Heart left ventricle (tissue), 16 donors: ENCODE measurements at regions of chr19 and their contacts with region 1.

Region 1: DNA sequence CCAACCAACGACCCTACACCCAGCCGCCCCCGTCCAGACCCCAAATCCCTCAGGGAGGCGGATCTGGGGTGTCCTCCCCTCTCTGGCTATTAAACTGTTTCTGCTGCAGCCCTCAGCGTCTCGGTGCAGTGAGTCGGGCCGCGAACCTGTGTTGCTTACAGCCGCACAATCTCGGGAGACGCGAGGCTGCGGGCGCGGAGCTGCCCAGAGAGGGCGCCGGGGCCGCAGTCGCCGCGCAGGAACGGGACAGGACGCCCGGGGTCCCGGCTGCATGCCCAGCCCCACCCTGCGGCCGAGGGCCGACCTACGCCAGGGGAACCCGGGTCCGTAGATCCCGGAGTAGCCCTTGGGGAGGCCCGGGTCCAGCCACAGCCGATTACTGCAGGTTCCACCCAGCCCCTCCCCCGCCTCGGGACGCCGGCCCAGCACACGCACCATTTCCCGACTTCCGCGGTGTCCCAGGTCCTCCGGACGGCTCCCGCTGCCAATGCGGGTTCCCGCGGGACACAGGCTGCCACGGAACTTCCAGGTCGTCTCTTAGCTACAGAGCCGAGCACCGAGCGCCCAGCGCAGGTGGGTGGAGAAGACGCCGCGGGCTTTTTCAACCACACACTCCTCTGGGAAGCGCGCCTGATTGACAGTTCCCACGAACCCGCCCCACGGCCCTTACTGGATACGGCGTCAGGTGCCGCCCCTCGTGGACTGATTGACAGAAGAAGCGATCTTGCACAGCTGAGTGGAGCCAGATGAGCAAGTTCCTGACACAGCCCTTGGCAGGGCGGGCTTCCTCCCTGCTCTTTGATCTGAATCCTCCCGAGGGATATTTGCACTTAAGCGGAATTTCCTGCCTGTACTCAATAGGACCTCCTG is at the start of gene ZNF799:
- DNase-seq: peak; percentile 98 to 99 (median 98)
- ATAC-seq: peak; percentile 99 to 100 (median 100)
- H3K4me3 ChIP-seq: peak within 1 kb of the TSS; percentile 67 to 94 (median 84)
- H3K27ac ChIP-seq: peak within 1 kb of the TSS; percentile 19 to 93 (median 88)
- H3K4me1 ChIP-seq: peaks cover 0 to 13% (median 5%) of the 10 kb centered on the region in 12 donors
- H3K27me3 ChIP-seq: no peaks in the 10 kb centered on the region
- CTCF ChIP-seq: peak in 4 of 12 donors; percentile 16 to 34 (median 30)
- POLR2A ChIP-seq: peak in 1 of 2 donors; percentile 62
- total RNA-seq, gene ZNF799: 1.5 to 3.9 (median 2.1) TPM

Region 2: GRCh38 chr19:12333162-12334159 is 67.4 kb before region 1 on chr19 and contains the start of gene ZNF563:
- intact Hi-C with region 1: loop called in 1 of 10 experiments (anchors 5 kb)
- DNase-seq: peak; percentile 96 to 99 (median 98)
- ATAC-seq: peak; percentile 97 to 99 (median 99)
- H3K4me3 ChIP-seq: peak within 1 kb of the TSS; percentile 63 to 99 (median 80)
- H3K27ac ChIP-seq: peak within 1 kb of the TSS; percentile 79 to 97 (median 90)
- H3K4me1 ChIP-seq: peaks cover 0 to 37% (median 17%) of the 10 kb centered on the region in 12 donors
- H3K27me3 ChIP-seq: no peaks in the 10 kb centered on the region
- CTCF ChIP-seq: no peak
- POLR2A ChIP-seq: peak; percentile 46 to 95
- total RNA-seq, gene ZNF563: 1.5 to 6.9 (median 3.8) TPM

Region 3: DNA sequence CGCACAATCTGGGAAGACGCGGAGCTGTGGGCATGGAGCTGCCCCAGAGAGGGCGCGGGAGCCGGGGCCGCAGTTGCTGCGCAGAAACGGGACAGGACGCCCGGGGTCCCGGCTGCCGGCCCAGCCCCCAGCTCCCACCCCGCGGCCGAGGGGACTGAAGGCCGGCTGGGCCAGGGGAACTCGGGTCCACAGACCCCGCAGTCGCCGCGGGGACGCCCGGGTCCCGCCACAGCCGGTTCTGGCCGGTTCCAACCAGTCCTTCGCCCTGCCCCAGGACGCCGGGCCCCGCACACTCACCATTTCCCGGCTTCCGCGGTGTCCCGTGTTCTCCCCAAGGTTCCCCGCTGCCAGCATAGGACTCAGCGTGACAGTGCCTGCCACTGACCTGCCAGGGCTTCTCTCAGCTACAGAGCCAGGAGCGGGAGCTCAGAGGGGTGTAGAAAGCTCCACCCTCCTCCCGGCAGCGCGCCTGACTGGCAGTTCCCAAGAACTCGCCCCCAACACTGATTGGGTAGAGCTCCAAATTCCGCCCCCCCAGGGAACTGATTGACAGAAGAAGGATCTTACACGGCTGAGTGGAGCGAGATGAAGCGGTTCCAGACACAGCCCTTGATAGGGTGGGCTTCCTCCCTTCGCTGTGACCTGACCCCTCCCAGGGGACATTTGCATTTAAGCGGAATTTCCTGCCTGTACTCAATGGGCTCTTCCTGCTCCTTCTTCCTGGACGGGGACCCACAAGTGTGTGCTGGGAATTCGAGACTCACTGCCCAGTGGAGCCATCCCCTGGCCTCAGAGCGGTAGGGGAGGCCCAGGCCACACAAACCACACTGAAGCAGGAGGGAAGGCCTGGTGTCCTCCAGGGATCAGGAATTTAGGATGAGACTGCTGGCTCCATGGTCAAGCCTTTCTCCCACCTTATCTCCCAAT is 35.4 kb before region 1 on chr19 and contains the start of gene ZNF442:
- intact Hi-C with region 1: loop called in 2 of 10 experiments (anchors 2 to 5 kb)
- DNase-seq: peak; percentile 94 to 99 (median 98)
- ATAC-seq: peak; percentile 99 to 100 (median 99)
- H3K4me3 ChIP-seq: peak within 1 kb of the TSS; percentile 66 to 99 (median 94)
- H3K27ac ChIP-seq: peak within 1 kb of the TSS; percentile 77 to 97 (median 90)
- H3K4me1 ChIP-seq: peaks cover 0 to 19% (median 11%) of the 10 kb centered on the region in 12 donors
- H3K27me3 ChIP-seq: no peaks in the 10 kb centered on the region
- CTCF ChIP-seq: peak; percentile 22 to 83 (median 66)
- POLR2A ChIP-seq: peak; percentile 9 to 93
- total RNA-seq, gene ZNF442: 1.1 to 4.3 (median 3.6) TPM

Region 4: GRCh38 chr19:12440541-12441316 is 39.9 kb after region 1 on chr19 and contains the start of gene ZNF443:
- intact Hi-C with region 1: loop called in 2 of 10 experiments (anchors 2 kb)
- DNase-seq: peak; percentile 98 to 99 (median 99)
- ATAC-seq: peak; percentile 100
- H3K4me3 ChIP-seq: peak within 1 kb of the TSS; percentile 58 to 87 (median 76)
- H3K27ac ChIP-seq: peak within 1 kb of the TSS; percentile 40 to 87 (median 76)
- H3K4me1 ChIP-seq: peaks cover 0 to 12% (median 0%) of the 10 kb centered on the region in 12 donors
- H3K27me3 ChIP-seq: no peaks in the 10 kb centered on the region
- CTCF ChIP-seq: peak in 2 of 12 donors; percentile 12 to 21
- POLR2A ChIP-seq: peak in 1 of 2 donors; percentile 59
- total RNA-seq, gene ZNF443: 1.5 to 3.6 (median 2.1) TPM

Region 5: DNA sequence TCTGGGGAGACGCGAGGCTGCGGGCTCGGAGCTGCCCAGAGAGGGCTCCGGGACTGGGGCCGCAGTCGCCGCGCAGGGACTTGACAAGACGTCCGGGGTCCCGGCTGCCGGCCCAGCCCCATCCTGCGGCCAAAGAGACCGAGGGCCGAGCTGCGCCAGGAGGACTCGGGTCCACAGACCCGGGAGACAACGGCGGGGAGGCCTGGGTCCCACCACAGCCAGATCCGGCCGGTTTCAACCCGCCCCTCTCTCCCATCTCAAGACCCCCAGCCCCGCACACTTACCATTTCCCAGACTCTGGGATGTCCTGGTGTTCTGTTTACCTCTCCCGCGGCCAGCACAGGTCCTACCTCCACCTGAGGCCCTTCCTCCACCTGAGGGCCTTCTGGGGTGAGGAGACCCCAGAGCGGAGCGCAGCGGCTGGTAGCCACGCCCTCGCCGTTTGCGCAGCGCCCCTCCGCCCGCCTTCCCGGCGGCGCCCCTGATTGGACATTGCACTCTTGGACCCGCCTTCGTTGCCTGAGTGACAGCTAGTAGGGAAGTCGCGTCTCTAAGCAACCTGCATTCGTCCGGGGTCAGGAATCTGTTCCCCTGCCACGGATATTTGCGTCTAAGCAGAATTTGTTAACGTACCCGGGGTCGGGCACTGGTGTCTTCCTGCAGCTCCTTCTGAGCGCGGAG is 83.6 kb after region 1 on chr19 and contains the start of gene ZNF709:
- intact Hi-C with region 1: loop called in 1 of 10 experiments (anchors 10 kb)
- DNase-seq: peak; percentile 91 to 95 (median 93)
- ATAC-seq: peak; percentile 98 to 100 (median 100)
- H3K4me3 ChIP-seq: peak within 1 kb of the TSS; percentile 80 to 99 (median 94)
- H3K27ac ChIP-seq: peak within 1 kb of the TSS; percentile 39 to 87 (median 76)
- H3K4me1 ChIP-seq: peaks cover 0 to 27% (median 13%) of the 10 kb centered on the region in 12 donors
- H3K27me3 ChIP-seq: no peaks in the 10 kb centered on the region
- CTCF ChIP-seq: no peak
- POLR2A ChIP-seq: peak in 1 of 2 donors; percentile 51
- total RNA-seq, gene ZNF709: 0.89 to 2.9 (median 1.7) TPM

Region 6: GRCh38 chr19:12495002-12495802 is 94.3 kb after region 1 on chr19:
- intact Hi-C with region 1: loop called in 2 of 10 experiments (anchors 2 to 5 kb)
- DNase-seq: peak; percentile 93 to 97 (median 96)
- ATAC-seq: peak; percentile 100
- H3K4me3 ChIP-seq: peak overlapping the region; percentile 8 to 84 (median 66)
- H3K27ac ChIP-seq: peak overlapping the region; percentile 49 to 93 (median 84)
- H3K4me1 ChIP-seq: peaks cover 0 to 13% (median 7%) of the 10 kb centered on the region in 12 donors
- H3K27me3 ChIP-seq: no peaks in the 10 kb centered on the region
- CTCF ChIP-seq: peak in 11 of 12 donors; percentile 18 to 75 (median 48)
- POLR2A ChIP-seq: peak in 1 of 2 donors; percentile 83

Region 7: DNA sequence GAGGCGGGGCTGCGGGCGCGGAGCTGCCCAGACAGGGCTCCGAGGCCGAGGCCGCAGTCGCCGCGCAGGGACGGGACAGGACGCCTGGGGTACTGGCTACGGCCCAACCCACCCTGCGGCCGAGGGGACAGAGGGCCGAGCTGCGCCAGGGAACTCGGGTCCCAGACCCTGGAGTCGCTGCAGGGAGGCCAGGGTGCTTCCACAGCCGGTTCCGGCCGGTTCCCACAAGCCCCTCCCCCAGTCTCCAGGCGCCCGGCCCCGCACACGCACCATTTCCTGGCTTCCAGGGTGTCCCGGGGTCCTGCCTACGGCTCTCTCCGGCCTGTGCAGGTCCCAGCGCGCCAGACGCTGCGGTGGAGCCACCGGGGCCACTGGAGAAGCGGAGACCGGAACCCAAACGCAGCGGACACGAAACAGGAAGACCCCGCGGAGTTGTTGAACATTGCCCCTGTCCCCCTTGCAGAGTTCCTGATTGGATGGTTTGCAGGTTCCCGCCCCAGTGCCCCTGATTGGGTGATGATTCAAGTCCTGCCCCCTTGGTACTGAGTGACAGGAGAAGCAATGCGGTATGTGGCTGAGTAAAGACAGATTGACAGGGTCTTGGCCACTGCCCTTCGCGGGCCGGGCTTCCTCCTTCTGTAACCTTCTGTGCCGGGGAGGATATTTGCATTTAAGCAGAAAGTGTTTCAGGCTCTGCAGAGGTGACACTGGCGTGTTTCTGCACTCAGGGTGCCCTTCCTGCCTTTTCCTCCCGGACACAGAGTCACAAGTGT is 150.4 kb after region 1 on chr19 and contains the start of gene ZNF564:
- intact Hi-C with region 1: loop called in 2 of 10 experiments (anchors 1 to 5 kb)
- DNase-seq: peak; percentile 93 to 98 (median 97)
- ATAC-seq: peak; percentile 98
- H3K4me3 ChIP-seq: peak within 1 kb of the TSS; percentile 54 to 98 (median 82)
- H3K27ac ChIP-seq: peak within 1 kb of the TSS; percentile 91 to 100 (median 97)
- H3K4me1 ChIP-seq: peaks cover 0 to 52% (median 29%) of the 10 kb centered on the region in 12 donors
- H3K27me3 ChIP-seq: peaks cover 0 to 5% (median 0%) of the 10 kb centered on the region in 9 donors
- CTCF ChIP-seq: no peak
- POLR2A ChIP-seq: peak in 1 of 2 donors; percentile 91
- total RNA-seq, gene ZNF564: 6.1 to 10.4 (median 8.0) TPM